ENCODE measurements at regions of chr20 and their contacts with region 1.

Region 1: DNA sequence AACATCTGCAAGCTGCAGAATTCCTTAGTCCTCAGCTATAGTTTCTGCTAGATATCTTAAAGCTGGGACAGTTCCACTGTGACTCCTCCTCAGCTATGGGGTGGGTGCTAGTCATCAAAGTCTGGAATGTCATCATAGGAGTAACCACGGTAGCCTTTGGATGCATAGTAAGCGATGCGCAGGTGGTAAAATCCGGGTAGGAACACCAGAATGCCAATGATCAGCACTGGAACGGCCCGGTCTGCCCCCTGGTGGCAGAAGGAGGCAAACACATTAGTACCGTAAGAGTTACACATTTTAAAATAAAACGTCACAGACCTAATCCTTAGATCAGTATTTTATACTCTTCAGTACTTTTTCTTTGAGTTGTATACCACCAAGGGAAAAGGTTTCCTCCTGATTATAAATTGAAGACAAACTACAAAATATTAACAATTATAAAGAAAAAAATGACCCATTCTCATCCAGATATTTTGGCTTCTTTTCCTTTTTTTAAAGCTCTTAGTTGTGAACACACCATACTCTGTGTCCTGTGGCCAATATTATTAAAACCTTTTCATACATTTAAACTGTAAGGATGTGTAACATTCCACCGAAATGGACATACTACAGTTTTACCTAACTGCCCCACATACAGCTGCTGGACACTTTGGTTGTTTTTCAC is 18.9 kb downstream of the PCNA start:
- DNase-seq: peak; percentile 49
- H3K4me3 Mint-ChIP-seq: no peak overlapping the region
- H3K27ac Mint-ChIP-seq: no peak overlapping the region
- H3K4me1 Mint-ChIP-seq: peaks cover 9% of the 10 kb centered on the region
- H3K27me3 Mint-ChIP-seq: no peaks in the 10 kb centered on the region

Region 2: GRCh38 chr20:4956200-4956810 is 144.5 kb before region 1 on chr20:
- intact Hi-C with region 1: loop called (anchors 2 kb)
- DNase-seq: no peak
- H3K4me3 Mint-ChIP-seq: no peak overlapping the region
- H3K27ac Mint-ChIP-seq: no peak overlapping the region
- H3K4me1 Mint-ChIP-seq: peaks cover 14% of the 10 kb centered on the region
- H3K27me3 Mint-ChIP-seq: no peaks in the 10 kb centered on the region

Region 3: DNA sequence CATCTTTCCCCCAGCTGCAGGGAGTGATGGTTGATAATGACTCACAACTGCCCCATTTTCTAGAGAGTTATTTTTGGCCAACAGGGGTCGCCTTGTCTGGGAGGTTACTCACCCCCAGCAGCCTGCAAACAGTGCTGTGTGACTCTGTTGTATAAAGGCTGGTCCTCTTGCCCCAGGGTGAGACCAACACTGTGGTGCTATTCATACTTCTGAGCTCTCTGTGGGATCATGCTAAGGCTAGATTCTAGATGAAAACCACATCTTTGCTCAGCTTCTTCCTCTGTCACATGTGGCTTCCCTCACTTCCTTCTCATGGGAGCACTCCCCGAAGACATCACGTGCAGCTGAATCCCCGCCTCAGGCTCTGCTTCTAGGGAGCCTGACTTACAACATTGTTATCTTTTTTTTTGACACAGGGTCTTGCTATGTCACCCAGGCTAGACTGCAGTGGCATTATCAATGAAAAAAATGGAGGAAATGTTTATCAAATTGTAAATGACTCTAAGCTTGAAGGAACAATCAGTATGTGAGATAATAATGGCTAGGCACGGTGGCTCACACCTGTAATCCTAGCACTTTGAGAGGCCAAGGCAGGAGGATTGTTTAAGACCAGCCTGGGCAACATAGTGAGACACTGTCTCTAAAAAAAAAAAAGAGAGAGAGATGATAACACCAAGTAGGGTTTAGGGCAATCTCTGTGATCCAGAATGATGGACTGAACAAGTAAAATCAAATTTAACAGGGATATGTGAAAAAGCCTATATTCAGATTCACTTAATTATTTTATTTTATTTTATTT is 43.8 kb before region 1 on chr20:
- intact Hi-C with region 1: loop called (anchors 1 kb)
- DNase-seq: peak; percentile 69
- H3K4me3 Mint-ChIP-seq: peak overlapping the region; percentile 47
- H3K27ac Mint-ChIP-seq: peak overlapping the region; percentile 87
- H3K4me1 Mint-ChIP-seq: peaks cover 25% of the 10 kb centered on the region
- H3K27me3 Mint-ChIP-seq: peaks cover 3% of the 10 kb centered on the region

Region 4: DNA sequence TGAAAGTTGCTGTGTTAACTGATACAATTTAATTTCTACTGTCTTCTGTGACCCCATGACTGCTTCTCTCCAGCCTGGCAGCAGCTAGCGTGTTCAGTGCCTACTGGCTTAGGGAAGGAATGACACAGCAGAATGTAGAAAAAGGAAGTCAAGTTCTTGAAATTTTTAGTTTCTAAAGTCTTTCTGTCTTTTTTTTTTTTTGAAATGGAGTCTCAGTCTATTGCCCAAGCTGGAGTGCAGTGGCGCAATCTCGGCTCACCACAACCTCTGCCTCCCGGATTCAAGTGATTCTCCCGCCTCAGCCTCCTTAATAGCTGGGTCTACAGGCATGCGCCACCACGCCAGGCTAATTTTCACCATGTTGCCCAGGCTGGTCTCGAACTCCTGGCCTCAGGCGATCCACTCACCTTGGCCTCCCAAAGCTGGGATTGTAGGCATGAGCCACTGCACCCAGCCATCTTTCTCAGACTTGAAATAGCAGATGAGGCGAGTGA is 20.4 kb before region 1 on chr20:
- intact Hi-C with region 1: no loop called
- DNase-seq: peak; percentile 8
- H3K4me3 Mint-ChIP-seq: peak overlapping the region; percentile 17
- H3K27ac Mint-ChIP-seq: peak overlapping the region; percentile 73
- H3K4me1 Mint-ChIP-seq: peaks cover 44% of the 10 kb centered on the region
- H3K27me3 Mint-ChIP-seq: no peaks in the 10 kb centered on the region